WTC11 (cell line): ENCODE measurements at regions of chr4 and their contacts with region 1.

Region 1: DNA sequence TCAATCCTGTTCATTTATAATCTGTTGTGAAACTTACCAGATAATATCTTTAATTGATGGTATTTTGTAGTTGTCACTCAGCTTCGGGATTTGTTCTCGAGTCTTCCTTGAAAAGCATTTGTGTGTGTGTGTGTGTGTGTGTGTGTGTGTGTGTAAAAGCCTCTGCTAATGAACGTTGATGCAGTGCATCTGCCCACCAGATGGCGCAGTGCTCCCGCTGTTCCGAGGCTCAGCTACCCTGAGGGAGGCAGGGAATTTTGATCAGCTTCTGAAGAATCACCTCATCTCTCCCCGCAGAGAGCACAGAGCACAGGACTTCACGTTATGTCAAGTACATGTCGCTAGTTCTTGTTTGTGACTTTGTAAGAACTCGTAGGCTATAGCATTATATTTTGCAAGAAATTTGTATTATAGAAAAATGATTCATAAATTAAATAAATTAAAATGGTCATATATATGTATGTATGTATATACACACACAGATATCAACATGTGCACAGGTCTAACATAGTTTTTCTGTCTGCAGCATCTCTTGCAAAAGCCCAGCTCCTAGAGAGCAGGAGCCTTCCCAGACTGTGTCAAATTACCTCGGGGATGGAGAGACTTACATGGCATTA is 316.7 kb upstream of the IGFBP7 start:
- DNase-seq: peak; percentile 81
- ATAC-seq: peak; percentile 94
- H3K4me3 Mint-ChIP-seq: no peak overlapping the region
- H3K27ac Mint-ChIP-seq: no peak overlapping the region
- H3K4me1 Mint-ChIP-seq: peaks cover 4% of the 10 kb centered on the region; the same call in 1 of the 2 replicates
- H3K27me3 Mint-ChIP-seq: peaks cover 4% of the 10 kb centered on the region; the same call in 1 of the 2 replicates
- CTCF ChIP-seq: no peak; the same call in 1 of the 2 replicates

Region 2: GRCh38 chr4:57037982-57038604 is 388.8 kb before region 1 on chr4:
- CTCF ChIA-PET with region 1: interaction called, 13 read pairs
- POLR2A ChIA-PET with region 1: no interaction called
- DNase-seq: peak; percentile 85
- ATAC-seq: peak; percentile 92
- H3K4me3 Mint-ChIP-seq: peak overlapping the region; percentile 52
- H3K27ac Mint-ChIP-seq: no peak overlapping the region
- H3K4me1 Mint-ChIP-seq: peaks cover 13% of the 10 kb centered on the region
- H3K27me3 Mint-ChIP-seq: no peaks in the 10 kb centered on the region; the same call in 1 of the 2 replicates
- CTCF ChIP-seq: peak; percentile 70; the same call in 1 of the 2 replicates

Region 3: GRCh38 chr4:57442831-57443291 is 16.0 kb after region 1 on chr4:
- CTCF ChIA-PET with region 1: interaction called, 19 read pairs
- POLR2A ChIA-PET with region 1: no interaction called
- DNase-seq: peak; percentile 76
- ATAC-seq: peak; percentile 90
- H3K4me3 Mint-ChIP-seq: no peak overlapping the region
- H3K27ac Mint-ChIP-seq: no peak overlapping the region
- H3K4me1 Mint-ChIP-seq: peaks cover 2% of the 10 kb centered on the region; the same call in 1 of the 2 replicates
- H3K27me3 Mint-ChIP-seq: no peaks in the 10 kb centered on the region
- CTCF ChIP-seq: peak; percentile 43; the same call in 1 of the 2 replicates

Region 4: GRCh38 chr4:58061970-58062369 is 635.1 kb after region 1 on chr4:
- CTCF ChIA-PET with region 1: interaction called, 13 read pairs
- POLR2A ChIA-PET with region 1: no interaction called
- DNase-seq: no peak
- ATAC-seq: peak; percentile 79
- H3K4me3 Mint-ChIP-seq: no peak overlapping the region
- H3K27ac Mint-ChIP-seq: no peak overlapping the region
- H3K4me1 Mint-ChIP-seq: no peaks in the 10 kb centered on the region
- H3K27me3 Mint-ChIP-seq: no peaks in the 10 kb centered on the region
- CTCF ChIP-seq: 0 out of 2 replicates have a peak, but pooled peaks have one; percentile 10